ENCODE measurements at regions of chr5 and their contacts with region 1.

Region 1: DNA sequence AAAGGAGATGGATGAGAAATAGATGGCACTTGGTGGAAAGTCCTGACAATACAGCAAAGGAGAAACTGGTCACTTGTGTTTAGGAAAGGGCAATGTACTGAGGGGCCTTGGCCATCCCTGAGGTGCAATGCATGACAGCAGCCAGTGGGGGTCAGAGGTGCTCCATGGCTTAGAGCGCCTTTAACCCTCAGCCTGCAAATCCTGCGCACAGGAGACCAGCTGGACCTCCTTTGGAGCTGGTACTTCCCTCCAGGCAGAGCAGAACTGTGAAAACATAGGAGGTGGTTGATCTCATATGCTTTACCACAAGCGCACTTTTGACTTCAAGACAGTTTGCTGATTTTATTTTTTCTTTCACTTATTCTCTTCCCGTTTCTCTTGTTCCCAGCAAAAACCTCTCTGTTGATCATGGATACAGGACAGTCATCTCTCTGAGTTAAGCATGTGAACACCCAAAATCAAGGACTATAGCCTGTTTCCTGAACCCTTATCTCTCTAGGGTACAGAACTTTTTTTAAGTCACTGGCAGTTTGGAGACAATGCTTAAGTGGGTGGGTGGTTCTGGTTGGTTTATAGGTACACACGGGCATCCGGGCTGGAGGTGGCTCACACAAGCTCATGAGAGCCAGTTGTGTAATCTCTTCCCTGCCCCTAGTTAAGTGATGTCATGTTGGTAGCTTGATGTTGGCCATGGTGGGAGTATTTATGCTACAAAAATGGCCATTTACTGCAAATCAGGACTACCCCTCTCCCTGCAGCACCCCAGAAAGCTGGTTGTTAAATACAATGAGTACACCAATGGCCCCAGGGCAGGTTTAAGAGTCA is 37.6 kb upstream of the ANKRD55 start:
- DNase-seq: peak; percentile 63 to 83
- ATAC-seq: peak; percentile 97 to 100
- H3K4me3 ChIP-seq: no peak overlapping the region
- H3K27ac ChIP-seq: peak overlapping the region in 1 of 2 experiments; percentile 56; a peak in 4 of 6 replicates
- H3K4me1 ChIP-seq: peaks cover 18% of the 10 kb centered on the region
- CTCF ChIP-seq: peak; percentile 96
- EP300 ChIP-seq: no peak
- POLR2A ChIP-seq: no peak
- RAD21 ChIP-seq: peak; percentile 99

Region 2: GRCh38 chr5:56080375-56081052 is 190.3 kb before region 1 on chr5:
- CTCF ChIA-PET with region 1: no interaction called
- POLR2A ChIA-PET with region 1: no interaction called
- DNase-seq: no peak
- ATAC-seq: no peak
- H3K4me3 ChIP-seq: no peak overlapping the region
- H3K27ac ChIP-seq: peak overlapping the region in 1 of 2 experiments; percentile 14; a peak in 2 of 6 replicates
- H3K4me1 ChIP-seq: peaks cover 10% of the 10 kb centered on the region; the same call in 2 of the 3 replicates
- CTCF ChIP-seq: no peak
- EP300 ChIP-seq: no peak
- POLR2A ChIP-seq: no peak
- RAD21 ChIP-seq: no peak

Region 3: DNA sequence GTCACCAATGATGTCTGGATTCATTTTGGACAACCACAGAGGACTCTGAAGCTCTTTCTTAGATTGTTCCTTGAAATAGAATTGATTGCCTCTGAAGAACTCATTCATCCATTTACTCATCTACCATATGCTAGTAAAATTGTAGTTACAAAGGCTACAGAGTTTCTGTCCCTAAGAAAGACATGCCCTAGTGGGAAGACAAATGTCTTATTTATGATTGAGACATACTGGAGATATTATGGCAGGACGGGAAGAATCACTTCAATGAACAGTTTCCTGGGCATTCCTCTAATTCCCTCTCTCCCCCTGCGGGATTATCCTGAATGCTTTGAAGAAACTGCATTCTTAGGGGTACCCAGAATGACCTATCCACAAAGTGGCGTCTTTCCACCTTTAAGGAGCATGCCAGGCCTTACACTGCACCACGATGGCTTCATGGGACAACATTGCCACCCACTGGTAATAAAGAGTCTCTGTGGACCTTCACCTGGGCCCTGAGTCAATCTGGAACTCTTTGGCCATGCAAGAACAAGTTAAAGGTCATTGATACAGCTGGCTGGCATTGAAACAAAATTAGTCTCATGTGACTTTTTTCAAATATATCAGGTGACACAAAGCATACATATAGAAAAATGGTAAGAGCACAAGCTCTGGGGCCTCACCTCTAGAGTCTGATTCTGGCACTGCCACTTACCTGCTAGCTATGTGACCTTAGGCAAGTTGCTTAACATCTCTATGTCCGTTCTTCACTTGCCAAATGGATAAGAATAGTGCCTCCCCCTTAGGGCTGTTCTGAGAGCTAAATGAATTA is 69.7 kb before region 1 on chr5:
- CTCF ChIA-PET with region 1: interaction called, 10 read pairs
- POLR2A ChIA-PET with region 1: no interaction called
- DNase-seq: peak; percentile 72 to 90
- ATAC-seq: peak; percentile 100
- H3K4me3 ChIP-seq: no peak overlapping the region
- H3K27ac ChIP-seq: peak overlapping the region; percentile 65 to 82
- H3K4me1 ChIP-seq: peaks cover 28% of the 10 kb centered on the region
- CTCF ChIP-seq: peak; percentile 93
- EP300 ChIP-seq: no peak
- POLR2A ChIP-seq: no peak
- RAD21 ChIP-seq: peak; percentile 99

Region 4: GRCh38 chr5:56211298-56211865 is 59.4 kb before region 1 on chr5:
- CTCF ChIA-PET with region 1: no interaction called
- POLR2A ChIA-PET with region 1: no interaction called
- DNase-seq: peak; percentile 52 to 88
- ATAC-seq: peak; percentile 89 to 92
- H3K4me3 ChIP-seq: no peak overlapping the region
- H3K27ac ChIP-seq: peak overlapping the region; percentile 80 to 85
- H3K4me1 ChIP-seq: peaks cover 22% of the 10 kb centered on the region
- CTCF ChIP-seq: no peak
- EP300 ChIP-seq: peak; percentile 54 to 75; a peak in 3 of 5 replicates
- POLR2A ChIP-seq: no peak
- RAD21 ChIP-seq: no peak

Region 5: DNA sequence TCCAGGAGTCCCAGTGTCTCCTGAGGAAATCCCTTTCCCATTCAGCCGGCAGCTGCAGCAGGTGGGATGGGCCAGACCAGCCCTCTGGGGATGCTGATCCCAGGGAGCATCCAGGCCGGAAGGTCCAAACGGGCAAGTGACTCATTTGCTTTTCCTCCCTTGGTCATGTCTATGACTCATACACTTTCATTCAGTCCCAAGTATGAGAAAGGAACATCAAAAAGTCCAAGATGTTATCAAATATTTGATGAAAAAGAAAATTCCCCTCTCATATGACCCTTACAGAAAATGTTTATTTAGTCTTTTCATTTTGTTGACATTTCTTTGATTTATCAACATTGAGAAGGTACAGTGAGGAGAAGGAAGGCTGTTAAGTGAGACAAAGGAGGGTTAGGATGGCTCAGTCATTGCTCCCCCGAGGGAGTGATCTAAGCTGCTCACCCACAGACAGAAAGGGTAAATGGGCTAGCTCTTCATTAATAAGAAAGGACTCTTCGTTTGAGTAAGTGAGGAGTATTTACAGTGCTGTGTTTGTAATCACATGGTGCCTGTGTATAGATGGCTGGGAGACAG is 79.9 kb after region 1 on chr5:
- CTCF ChIA-PET with region 1: interaction called, 21 read pairs
- POLR2A ChIA-PET with region 1: no interaction called
- DNase-seq: peak; percentile 94 to 96
- ATAC-seq: peak; percentile 97 to 98
- H3K4me3 ChIP-seq: no peak overlapping the region
- H3K27ac ChIP-seq: peak overlapping the region; percentile 69 to 83
- H3K4me1 ChIP-seq: peaks cover 45% of the 10 kb centered on the region
- CTCF ChIP-seq: no peak
- EP300 ChIP-seq: peak; percentile 90 to 91; a peak in 3 of 5 replicates
- POLR2A ChIP-seq: no peak
- RAD21 ChIP-seq: peak in 1 of 2 experiments; percentile 66; a peak in 4 of 5 replicates

Region 6: GRCh38 chr5:56429082-56429891 is 158.5 kb after region 1 on chr5:
- CTCF ChIA-PET with region 1: no interaction called
- POLR2A ChIA-PET with region 1: no interaction called
- DNase-seq: peak in 1 of 2 experiments; percentile 62
- ATAC-seq: peak; percentile 74 to 80; a peak in 5 of 6 replicates
- H3K4me3 ChIP-seq: no peak overlapping the region
- H3K27ac ChIP-seq: peak overlapping the region; percentile 4 to 52; a peak in 2 of 6 replicates
- H3K4me1 ChIP-seq: peaks cover 9% of the 10 kb centered on the region; the same call in 1 of the 3 replicates
- CTCF ChIP-seq: no peak
- EP300 ChIP-seq: no peak
- POLR2A ChIP-seq: no peak
- RAD21 ChIP-seq: no peak

Region 7: GRCh38 chr5:56656816-56657729 is 386.3 kb after region 1 on chr5:
- CTCF ChIA-PET with region 1: no interaction called
- POLR2A ChIA-PET with region 1: no interaction called
- DNase-seq: no peak
- ATAC-seq: no peak
- H3K4me3 ChIP-seq: no peak overlapping the region
- H3K27ac ChIP-seq: no peak overlapping the region
- H3K4me1 ChIP-seq: peaks cover 6% of the 10 kb centered on the region; the same call in 1 of the 3 replicates
- CTCF ChIP-seq: no peak
- EP300 ChIP-seq: no peak
- POLR2A ChIP-seq: no peak
- RAD21 ChIP-seq: no peak

Region 8: GRCh38 chr5:56818450-56819037 is 547.8 kb after region 1 on chr5:
- CTCF ChIA-PET with region 1: interaction called, 11 read pairs
- POLR2A ChIA-PET with region 1: no interaction called
- DNase-seq: no peak
- ATAC-seq: no peak
- H3K4me3 ChIP-seq: no peak overlapping the region
- H3K27ac ChIP-seq: no peak overlapping the region
- H3K4me1 ChIP-seq: peaks cover 17% of the 10 kb centered on the region; the same call in 2 of the 3 replicates
- CTCF ChIP-seq: peak; percentile 35
- EP300 ChIP-seq: no peak
- POLR2A ChIP-seq: no peak
- RAD21 ChIP-seq: peak; percentile 19 to 27; a peak in 3 of 5 replicates

Region 9: DNA sequence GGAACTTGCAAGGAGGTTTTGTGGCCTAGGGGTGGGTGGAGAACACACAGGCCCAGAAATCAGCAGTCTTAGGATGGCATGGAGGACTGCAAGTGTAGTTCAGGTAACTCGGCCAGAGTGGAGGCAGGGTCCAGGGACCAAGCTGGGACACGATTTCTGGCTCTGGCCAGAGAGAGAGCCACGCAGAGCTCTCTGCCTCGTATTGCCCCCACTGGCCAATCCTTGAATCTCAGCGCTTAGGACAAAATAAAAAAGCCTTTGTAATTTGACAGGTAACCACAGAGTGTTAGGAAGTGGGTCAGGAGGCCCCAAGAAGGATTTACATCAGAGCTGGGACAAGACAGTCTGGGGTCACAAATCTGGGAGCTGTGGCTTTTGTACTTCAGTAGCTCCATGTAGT is 556.3 kb after region 1 on chr5:
- CTCF ChIA-PET with region 1: interaction called, 340 read pairs
- POLR2A ChIA-PET with region 1: no interaction called
- DNase-seq: peak; percentile 16 to 33
- ATAC-seq: peak; percentile 90
- H3K4me3 ChIP-seq: no peak overlapping the region
- H3K27ac ChIP-seq: no peak overlapping the region
- H3K4me1 ChIP-seq: peaks cover 6% of the 10 kb centered on the region; the same call in 1 of the 3 replicates
- CTCF ChIP-seq: no peak
- EP300 ChIP-seq: no peak
- POLR2A ChIP-seq: no peak
- RAD21 ChIP-seq: no peak; a peak in 1 of 5 replicates

Region 10: DNA sequence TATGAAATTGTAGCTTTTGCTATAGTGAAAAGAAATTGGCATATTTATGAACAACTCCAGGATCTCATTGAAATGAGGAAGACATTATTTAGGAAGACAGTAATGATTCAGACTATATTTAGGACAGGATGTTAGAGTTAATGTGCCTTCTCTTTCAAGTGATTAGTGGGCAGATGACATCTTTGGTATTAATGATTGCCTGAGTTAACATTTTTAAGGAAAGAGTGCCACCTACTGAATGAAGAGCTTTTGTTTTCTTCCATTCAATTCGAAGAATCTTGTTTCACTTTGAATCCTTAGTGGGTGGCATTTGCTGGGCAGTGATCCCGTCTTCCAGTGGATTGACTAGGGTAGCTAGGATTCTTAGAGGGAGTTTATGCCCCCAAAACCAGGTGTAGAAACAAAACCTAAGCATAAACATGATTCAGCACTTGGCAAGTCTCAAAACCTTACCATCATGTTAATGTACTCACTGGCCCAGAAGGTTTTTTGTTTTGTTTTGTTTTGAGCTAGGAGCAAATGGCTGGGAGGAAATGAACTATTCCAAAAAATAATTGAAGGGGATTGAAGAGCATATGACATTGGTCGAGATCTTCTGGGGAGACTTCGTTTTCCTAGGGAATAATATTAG is 567.7 kb after region 1 on chr5:
- CTCF ChIA-PET with region 1: interaction called, 340 read pairs
- POLR2A ChIA-PET with region 1: interaction called, 4 read pairs
- DNase-seq: peak; percentile 25 to 60
- ATAC-seq: peak; percentile 73 to 79
- H3K4me3 ChIP-seq: no peak overlapping the region; the same call in 2 of the 3 replicates
- H3K27ac ChIP-seq: peak overlapping the region; percentile 64 to 79
- H3K4me1 ChIP-seq: peaks cover 21% of the 10 kb centered on the region; the same call in 2 of the 3 replicates
- CTCF ChIP-seq: peak; percentile 92
- EP300 ChIP-seq: no peak
- POLR2A ChIP-seq: no peak
- RAD21 ChIP-seq: peak; percentile 89 to 93